Caco-2 (cell line): ENCODE measurements at regions of chr15 and their contacts with region 1.

Region 1: DNA sequence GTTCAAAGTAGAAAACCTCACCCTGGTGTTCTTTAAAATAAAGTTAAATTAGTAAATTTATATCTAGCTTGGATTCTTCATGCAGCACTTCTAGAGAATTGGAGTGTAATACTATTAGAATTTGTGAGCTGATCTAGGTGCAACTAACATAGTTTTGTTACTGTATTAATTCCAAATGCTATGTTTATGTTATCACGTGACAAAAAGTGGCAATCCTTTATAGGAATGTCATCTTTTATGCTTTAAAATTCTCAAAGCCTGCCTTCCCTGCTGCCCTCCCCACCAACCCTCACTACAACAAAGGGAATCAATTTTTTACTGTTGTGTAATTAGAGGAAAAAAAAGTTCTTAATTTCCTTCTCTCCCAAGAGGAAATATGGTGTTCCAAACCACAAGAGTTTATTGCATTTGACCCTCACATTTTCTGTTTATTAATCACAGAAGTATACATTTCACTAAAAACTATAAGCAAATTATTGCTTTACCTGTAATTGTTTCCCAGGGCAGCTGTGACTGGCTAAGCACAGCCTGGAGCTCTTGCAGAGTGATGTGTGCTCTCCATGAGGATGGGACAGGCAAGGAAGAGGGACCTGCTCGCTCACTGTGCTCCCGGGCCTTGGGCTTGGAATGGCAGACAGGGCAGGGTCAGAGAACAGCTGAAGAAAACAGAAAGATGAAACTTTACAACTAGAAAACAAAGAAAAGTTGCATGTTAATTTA is 31.2 kb upstream of the ATP10A start:
- DNase-seq: no peak
- H3K4me3 ChIP-seq: no peak overlapping the region
- H3K4me3 Mint-ChIP-seq: no peak overlapping the region
- H3K27ac Mint-ChIP-seq: no peak overlapping the region
- H3K4me1 ChIP-seq: peaks cover 26% of the 10 kb centered on the region
- H3K4me1 Mint-ChIP-seq: peaks cover 22% of the 10 kb centered on the region
- H3K27me3 ChIP-seq: no peaks in the 10 kb centered on the region
- H3K27me3 Mint-ChIP-seq: no peaks in the 10 kb centered on the region
- CTCF ChIP-seq: no peak

Region 2: GRCh38 chr15:25877681-25878080 is 16.7 kb before region 1 on chr15:
- CTCF ChIA-PET with region 1: no interaction called
- POLR2A ChIA-PET with region 1: no interaction called
- intact Hi-C with region 1: loop called (anchors 2 kb)
- DNase-seq: peak; percentile 50 to 54
- H3K4me3 ChIP-seq: no peak overlapping the region
- H3K4me3 Mint-ChIP-seq: no peak overlapping the region
- H3K27ac Mint-ChIP-seq: peak overlapping the region; percentile 68
- H3K4me1 ChIP-seq: peaks cover 52% of the 10 kb centered on the region
- H3K4me1 Mint-ChIP-seq: peaks cover 30% of the 10 kb centered on the region
- H3K27me3 ChIP-seq: no peaks in the 10 kb centered on the region
- H3K27me3 Mint-ChIP-seq: no peaks in the 10 kb centered on the region
- CTCF ChIP-seq: no peak

Region 3: DNA sequence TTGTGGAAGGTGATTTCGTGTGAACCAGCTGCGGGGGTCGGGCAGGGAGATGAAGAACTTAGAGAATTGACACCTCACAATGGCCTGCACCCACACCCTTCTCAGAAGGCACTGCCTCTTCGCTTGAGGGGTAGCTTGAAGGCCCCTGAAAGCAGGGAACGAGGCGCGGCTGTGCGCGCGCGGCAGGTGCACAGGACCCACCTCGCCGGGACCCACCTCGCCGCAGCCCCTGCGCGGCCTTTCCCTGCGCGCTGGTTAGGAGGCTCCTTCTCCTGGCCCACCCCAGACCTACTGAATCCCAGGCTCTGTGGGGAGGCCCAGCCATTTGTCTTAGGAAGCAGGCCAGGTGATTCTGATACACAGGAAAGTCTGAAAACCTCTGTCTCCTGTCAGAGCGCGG is 15.0 kb after region 1 on chr15:
- CTCF ChIA-PET with region 1: no interaction called
- POLR2A ChIA-PET with region 1: no interaction called
- intact Hi-C with region 1: no loop called
- DNase-seq: no peak
- H3K4me3 ChIP-seq: no peak overlapping the region
- H3K4me3 Mint-ChIP-seq: no peak overlapping the region
- H3K27ac Mint-ChIP-seq: no peak overlapping the region
- H3K4me1 ChIP-seq: no peaks in the 10 kb centered on the region
- H3K4me1 Mint-ChIP-seq: no peaks in the 10 kb centered on the region
- H3K27me3 ChIP-seq: no peaks in the 10 kb centered on the region
- H3K27me3 Mint-ChIP-seq: no peaks in the 10 kb centered on the region
- CTCF ChIP-seq: no peak

Region 4: GRCh38 chr15:26023231-26023630 is 128.9 kb after region 1 on chr15:
- CTCF ChIA-PET with region 1: no interaction called
- POLR2A ChIA-PET with region 1: no interaction called
- intact Hi-C with region 1: no loop called
- DNase-seq: no peak
- H3K4me3 ChIP-seq: no peak overlapping the region
- H3K4me3 Mint-ChIP-seq: no peak overlapping the region
- H3K27ac Mint-ChIP-seq: peak overlapping the region; percentile 79
- H3K4me1 ChIP-seq: peaks cover 26% of the 10 kb centered on the region
- H3K4me1 Mint-ChIP-seq: peaks cover 34% of the 10 kb centered on the region
- H3K27me3 ChIP-seq: no peaks in the 10 kb centered on the region
- H3K27me3 Mint-ChIP-seq: no peaks in the 10 kb centered on the region
- CTCF ChIP-seq: no peak